Activated T-helper 2 cell treated with anti-CD3 and anti-CD28 coated beads, Interferon-gamma antibody, Interleukin-2, Interleukin-4, amounts not matched to agents 10 μg/mL and 5 μg/mL and 100 μg/mL, durations not matched to agents 14 hours and 24 hours and 36 hours (primary cell): ENCODE measurements at regions of chr1 and their contacts with region 1.

Region 1: DNA sequence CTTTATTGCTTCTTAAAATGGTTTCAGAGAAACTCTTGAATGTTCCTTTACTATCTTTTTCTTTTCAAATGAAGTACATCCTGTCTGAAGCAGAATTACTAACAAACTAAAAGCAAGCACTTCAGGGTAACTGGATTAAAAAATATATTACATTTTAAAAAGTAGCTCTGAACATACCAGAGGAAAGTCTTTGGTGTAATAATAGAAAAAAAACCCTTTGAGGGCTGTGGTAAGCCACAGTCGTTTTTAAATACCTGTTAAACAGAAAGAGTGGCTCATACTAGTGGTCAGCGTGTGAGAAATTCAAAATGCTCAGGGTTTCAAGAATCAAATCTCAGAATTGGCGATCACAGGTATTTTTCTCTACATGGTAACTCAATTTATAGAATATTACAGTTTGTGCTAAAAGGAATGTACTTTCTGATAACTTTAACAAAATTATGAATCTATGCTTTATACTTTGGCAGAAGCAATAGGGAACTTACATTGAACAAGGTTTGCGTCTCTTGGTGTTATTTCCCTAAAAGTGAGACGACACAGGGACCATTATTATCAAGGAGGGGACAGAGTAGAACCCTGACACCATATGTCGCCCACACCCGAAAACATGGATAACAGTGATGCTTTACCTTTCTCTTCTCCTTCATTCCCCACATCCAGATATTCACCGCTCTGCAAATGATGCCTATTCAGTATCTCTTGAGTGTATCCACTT is 97.0 kb upstream of the DPH5 start:
- DNase-seq: no peak
- H3K4me3 Mint-ChIP-seq: no peak overlapping the region
- H3K27ac Mint-ChIP-seq: peak overlapping the region; percentile 73
- H3K4me1 Mint-ChIP-seq: peaks cover 60% of the 10 kb centered on the region
- H3K27me3 Mint-ChIP-seq: no peaks in the 10 kb centered on the region

Region 2: DNA sequence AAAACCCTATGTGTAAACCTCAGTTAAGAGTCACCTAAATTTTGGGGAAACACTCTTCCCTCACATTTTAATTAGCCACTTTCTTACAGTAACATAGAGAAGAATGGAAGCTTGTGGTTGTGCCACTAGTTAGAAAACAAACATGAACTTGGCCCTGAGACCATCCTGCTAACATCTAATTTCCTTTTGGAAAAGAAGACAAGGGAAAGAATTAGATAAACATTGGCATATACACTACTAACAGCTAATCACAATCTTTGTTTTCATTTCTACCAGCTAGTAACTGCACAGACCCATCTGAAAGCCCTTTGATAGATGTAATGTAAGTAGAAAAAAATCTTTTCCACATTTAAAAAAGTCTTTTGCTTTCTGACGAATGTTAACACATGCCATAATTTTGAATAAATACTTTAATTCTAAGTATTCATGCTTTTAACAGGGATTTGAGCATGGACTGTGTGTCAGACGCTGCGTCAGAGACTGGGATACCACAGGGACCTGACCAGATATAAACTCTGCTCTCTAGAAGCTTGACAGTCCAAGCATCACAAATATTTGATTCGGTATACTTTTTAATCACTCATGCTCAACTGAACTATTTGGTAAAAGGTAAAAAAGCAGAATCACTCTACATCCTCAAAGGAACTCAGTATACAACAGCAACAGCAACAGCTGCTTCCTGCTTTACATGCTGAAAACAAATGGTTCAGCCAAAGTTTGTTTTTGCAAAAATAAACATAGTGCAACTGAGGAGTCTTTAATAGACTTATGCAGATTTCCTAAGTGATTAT is 127.2 kb before region 1 on chr1:
- intact Hi-C with region 1: no loop called
- DNase-seq: no peak
- H3K4me3 Mint-ChIP-seq: no peak overlapping the region
- H3K27ac Mint-ChIP-seq: no peak overlapping the region
- H3K4me1 Mint-ChIP-seq: peaks cover 8% of the 10 kb centered on the region
- H3K27me3 Mint-ChIP-seq: no peaks in the 10 kb centered on the region

Region 3: DNA sequence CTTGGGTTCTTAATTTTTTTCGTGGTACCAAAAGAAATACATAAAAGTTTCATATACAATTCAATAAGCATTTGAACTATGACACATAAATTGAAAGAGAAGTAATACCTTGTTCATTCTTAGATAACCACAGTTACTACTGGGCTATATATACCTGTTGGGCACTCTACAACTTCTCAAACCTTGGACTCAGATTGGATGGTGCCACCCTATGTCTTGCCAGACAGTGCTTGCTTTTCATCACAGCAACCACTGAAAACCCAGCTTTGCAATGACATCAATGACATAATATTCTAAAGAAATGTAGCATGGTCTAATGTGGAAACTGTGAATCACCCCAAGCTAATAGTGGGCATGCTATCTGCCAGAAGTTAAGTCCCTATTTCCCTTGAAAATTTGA is 34.2 kb before region 1 on chr1:
- intact Hi-C with region 1: loop called (anchors 2 kb)
- DNase-seq: no peak
- H3K4me3 Mint-ChIP-seq: no peak overlapping the region
- H3K27ac Mint-ChIP-seq: no peak overlapping the region
- H3K4me1 Mint-ChIP-seq: peaks cover 63% of the 10 kb centered on the region
- H3K27me3 Mint-ChIP-seq: no peaks in the 10 kb centered on the region

Region 4: GRCh38 chr1:101112051-101112780 is 10.4 kb before region 1 on chr1:
- intact Hi-C with region 1: loop called (anchors 1 kb)
- DNase-seq: peak; percentile 68
- H3K4me3 Mint-ChIP-seq: peak overlapping the region; percentile 58
- H3K27ac Mint-ChIP-seq: peak overlapping the region; percentile 89
- H3K4me1 Mint-ChIP-seq: peaks cover 60% of the 10 kb centered on the region
- H3K27me3 Mint-ChIP-seq: no peaks in the 10 kb centered on the region

Region 5: GRCh38 chr1:101264697-101265096 is 142.1 kb after region 1 on chr1:
- intact Hi-C with region 1: no loop called
- DNase-seq: peak; percentile 22
- H3K4me3 Mint-ChIP-seq: peak overlapping the region; percentile 38
- H3K27ac Mint-ChIP-seq: peak overlapping the region; percentile 67
- H3K4me1 Mint-ChIP-seq: peaks cover 62% of the 10 kb centered on the region
- H3K27me3 Mint-ChIP-seq: no peaks in the 10 kb centered on the region